Activated CD4-positive, alpha-beta memory T cell treated with anti-CD3 and anti-CD28 coated beads, Interleukin-2, amount 10 ng/mL, durations not matched to agents 7 days and 5 days (primary cell): ENCODE measurements at regions of chr6 and their contacts with region 1.

Region 1: DNA sequence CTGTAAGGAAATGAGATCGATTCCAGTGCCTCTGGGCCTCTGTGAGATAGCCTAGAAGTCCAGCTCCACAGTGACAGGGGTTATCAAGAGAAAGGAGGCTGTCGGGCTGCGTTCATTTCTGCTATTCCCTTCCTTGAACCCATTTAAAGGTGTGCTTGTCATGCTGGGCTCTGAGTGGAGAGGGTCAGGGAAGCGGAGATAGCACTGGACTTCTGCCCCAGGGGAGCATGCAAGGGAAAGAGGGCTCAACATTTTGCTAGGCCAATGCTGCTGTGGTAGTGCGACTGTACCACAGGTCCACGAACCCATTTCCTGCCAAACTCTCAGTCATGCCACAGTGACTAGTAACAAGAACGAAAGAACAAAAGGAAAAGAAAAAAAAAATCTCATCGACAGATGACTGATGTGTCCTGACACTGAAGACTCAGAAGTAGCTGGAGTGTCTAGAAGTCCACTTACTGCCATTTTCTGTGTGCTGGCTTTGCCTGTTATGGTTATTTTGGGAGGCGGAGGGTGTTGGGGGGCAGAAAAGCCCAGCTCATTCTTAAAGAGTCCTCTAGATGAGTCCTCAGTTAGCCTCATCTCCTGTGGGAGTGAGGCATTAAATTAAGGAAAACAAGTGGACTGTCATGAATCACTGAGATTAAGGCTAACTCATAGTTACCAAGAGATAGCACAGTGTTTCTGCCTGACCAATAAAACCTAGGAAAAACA is 8.1 kb downstream of the NEDD9 start:
- DNase-seq: peak; percentile 77
- H3K4me3 Mint-ChIP-seq: peak overlapping the region; percentile 55
- H3K27ac Mint-ChIP-seq: peak overlapping the region; percentile 92
- H3K4me1 Mint-ChIP-seq: peaks cover 80% of the 10 kb centered on the region
- H3K27me3 Mint-ChIP-seq: no peaks in the 10 kb centered on the region

Region 2: DNA sequence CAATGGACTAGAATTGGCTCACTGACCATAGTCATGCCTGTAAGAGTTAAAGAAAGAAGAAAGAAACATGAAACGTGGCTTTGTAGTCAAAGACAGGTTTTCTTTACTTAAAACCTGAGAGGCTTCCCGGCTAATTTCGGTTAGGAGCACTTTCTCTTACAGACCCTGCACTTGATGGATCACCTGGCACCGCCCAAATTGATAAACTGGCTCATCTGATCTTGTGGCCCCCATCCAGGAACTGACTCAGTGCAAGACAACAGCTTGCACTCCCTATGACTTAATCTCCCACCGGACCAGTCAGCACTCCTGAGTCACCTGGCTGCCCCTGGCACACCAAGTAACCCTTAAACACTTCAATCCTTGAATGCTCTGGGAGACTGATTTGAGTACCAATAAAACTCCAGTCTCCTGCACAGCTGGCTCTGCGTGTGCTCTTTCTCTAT is 464.5 kb before region 1 on chr6:
- CTCF ChIA-PET with region 1: no interaction called
- POLR2A ChIA-PET with region 1: no interaction called
- DNase-seq: no peak
- H3K4me3 Mint-ChIP-seq: no peak overlapping the region
- H3K27ac Mint-ChIP-seq: no peak overlapping the region
- H3K4me1 Mint-ChIP-seq: peaks cover 17% of the 10 kb centered on the region
- H3K27me3 Mint-ChIP-seq: no peaks in the 10 kb centered on the region

Region 3: GRCh38 chr6:11198663-11199603 is 25.5 kb before region 1 on chr6:
- CTCF ChIA-PET with region 1: interaction called, 15 read pairs
- POLR2A ChIA-PET with region 1: interaction called, 47 read pairs
- DNase-seq: peak; percentile 54
- H3K4me3 Mint-ChIP-seq: peak overlapping the region; percentile 46
- H3K27ac Mint-ChIP-seq: peak overlapping the region; percentile 84
- H3K4me1 Mint-ChIP-seq: peaks cover 71% of the 10 kb centered on the region
- H3K27me3 Mint-ChIP-seq: no peaks in the 10 kb centered on the region

Region 4: GRCh38 chr6:11207199-11207968 is 17.0 kb before region 1 on chr6:
- CTCF ChIA-PET with region 1: interaction called, 15 read pairs
- POLR2A ChIA-PET with region 1: interaction called, 47 read pairs
- DNase-seq: no peak
- H3K4me3 Mint-ChIP-seq: no peak overlapping the region
- H3K27ac Mint-ChIP-seq: no peak overlapping the region
- H3K4me1 Mint-ChIP-seq: peaks cover 57% of the 10 kb centered on the region
- H3K27me3 Mint-ChIP-seq: no peaks in the 10 kb centered on the region

Region 5: DNA sequence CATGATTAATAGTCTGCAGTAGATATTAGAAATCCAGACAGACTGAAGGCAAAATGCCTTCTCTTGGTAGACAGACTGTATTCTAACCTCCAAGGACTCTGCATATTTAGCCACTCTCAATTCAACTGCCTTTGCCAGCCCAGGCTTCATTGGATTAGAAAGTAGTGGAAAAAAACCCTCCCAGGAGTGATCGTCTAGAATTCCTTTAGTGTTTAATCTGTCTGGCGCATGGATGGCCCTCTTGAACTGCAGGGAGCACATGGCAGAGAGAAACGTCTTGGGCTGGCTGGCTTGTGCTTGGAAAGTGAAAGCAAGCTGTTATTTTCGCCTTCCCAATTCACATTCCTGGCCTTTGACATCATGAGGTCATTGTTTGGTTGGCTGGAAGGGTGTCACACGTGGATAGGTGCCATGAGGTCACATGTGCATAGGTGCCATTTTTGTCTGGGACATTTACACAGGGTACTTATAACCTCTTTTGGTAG is 38.9 kb after region 1 on chr6:
- CTCF ChIA-PET with region 1: no interaction called
- POLR2A ChIA-PET with region 1: interaction called, 79 read pairs
- DNase-seq: no peak
- H3K4me3 Mint-ChIP-seq: no peak overlapping the region
- H3K27ac Mint-ChIP-seq: no peak overlapping the region
- H3K4me1 Mint-ChIP-seq: peaks cover 41% of the 10 kb centered on the region
- H3K27me3 Mint-ChIP-seq: no peaks in the 10 kb centered on the region

Region 6: DNA sequence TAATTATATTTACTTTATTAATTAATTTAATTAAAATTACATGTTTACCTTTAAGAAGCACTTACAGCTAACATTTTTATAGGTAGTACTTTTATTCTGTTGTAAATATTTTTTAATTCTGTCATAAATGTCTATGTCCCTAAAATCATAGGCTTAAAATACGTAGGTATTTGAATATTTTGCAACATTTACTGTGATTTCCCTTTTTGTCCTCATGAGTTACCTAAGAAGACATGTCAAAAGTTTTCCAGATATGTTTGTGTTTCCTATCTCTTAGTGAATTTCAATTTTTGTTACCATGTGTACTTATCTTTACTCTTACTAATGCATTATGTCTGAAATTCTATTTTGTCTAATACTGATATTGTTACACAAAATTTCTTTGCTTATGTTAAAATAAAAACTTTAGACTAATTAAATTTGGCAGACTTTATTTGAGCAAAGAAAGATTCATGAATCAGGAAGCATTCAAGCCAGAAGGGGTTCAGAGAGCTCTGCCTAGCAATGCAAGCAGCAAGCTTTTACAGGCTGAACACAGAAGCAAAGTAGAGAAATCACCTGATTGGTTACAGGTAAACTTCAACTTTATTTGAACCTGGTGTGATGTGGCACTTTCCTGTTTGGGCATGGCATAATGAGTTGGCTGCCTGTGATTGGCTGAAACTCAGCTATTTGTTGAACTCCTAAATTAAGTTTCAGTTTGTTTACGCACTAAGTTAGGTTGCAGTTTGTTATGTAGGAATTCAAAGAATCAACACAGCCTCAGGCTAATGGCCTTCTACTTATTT is 190.0 kb after region 1 on chr6:
- CTCF ChIA-PET with region 1: interaction called, 4 read pairs
- POLR2A ChIA-PET with region 1: interaction called, 77 read pairs
- DNase-seq: peak; percentile 76
- H3K4me3 Mint-ChIP-seq: peak overlapping the region; percentile 8
- H3K27ac Mint-ChIP-seq: peak overlapping the region; percentile 59
- H3K4me1 Mint-ChIP-seq: peaks cover 55% of the 10 kb centered on the region
- H3K27me3 Mint-ChIP-seq: no peaks in the 10 kb centered on the region